Ascending aorta (tissue), 2 donors: ENCODE measurements at regions of chr6 and their contacts with region 1.

Region 1: GRCh38 chr6:35583893-35584688 is 71.4 kb upstream of the TULP1 start:
- DNase-seq: peak in 1 of 2 donors; percentile 83
- H3K4me3 ChIP-seq: no peak overlapping the region
- H3K27ac ChIP-seq: peak overlapping the region in 1 of 2 donors; percentile 3
- H3K4me1 ChIP-seq: peaks cover 7 to 50% of the 10 kb centered on the region in 2 donors
- H3K27me3 ChIP-seq: no peaks in the 10 kb centered on the region
- CTCF ChIP-seq: peak; percentile 70 to 86 (median 86)

Region 2: DNA sequence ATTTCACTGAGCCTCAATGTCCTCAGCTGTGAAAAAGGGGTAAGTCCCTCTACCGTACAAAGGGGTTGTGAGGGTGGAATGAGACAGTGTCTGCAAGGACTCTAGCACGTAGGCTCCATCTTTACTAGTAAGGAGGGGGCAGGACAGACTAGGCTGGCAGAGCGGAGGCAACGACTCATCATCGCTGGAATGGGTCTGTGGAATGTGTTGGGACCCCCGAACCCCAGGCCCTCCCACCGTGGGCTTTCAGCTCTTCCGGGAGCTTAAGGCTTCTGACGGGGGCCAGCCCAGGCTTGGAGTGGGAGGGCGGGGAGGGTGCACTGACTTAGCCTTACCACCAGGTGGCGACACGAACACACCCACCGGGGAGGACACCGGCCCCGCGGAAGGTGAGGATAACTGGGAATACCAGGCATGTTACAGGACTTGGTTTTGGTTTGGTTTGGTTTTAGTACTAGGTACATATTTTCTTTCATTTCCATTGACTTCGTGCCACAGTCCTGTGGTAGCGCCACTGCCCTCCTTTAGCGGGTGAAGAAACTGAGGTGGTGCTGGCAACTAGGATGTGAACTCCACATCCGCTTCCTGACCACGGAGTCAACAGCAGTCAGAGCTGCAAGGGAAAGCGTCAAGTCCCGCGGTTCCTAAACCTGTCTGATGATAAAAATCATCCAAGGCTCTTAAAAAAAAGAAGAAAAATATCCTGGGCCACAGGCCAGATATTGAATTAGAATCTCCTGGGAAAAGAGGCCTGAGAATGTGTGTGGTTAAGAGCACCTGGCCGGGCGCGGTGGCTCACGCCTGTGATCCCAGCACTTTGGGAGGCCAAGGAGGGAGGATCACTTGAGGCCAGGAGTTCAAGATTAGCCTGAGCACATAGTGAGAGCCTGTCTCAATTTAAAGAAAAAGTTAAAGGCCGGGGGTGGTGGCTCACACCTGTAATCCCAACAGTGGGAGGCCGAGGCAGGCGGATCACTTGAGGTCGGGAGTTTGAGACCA is 61.1 kb before region 1 on chr6:
- intact Hi-C with region 1: loop called (anchors 5 kb)
- DNase-seq: peak; percentile 10 to 83
- H3K4me3 ChIP-seq: peak overlapping the region; percentile 30 to 49
- H3K27ac ChIP-seq: no peak overlapping the region
- H3K4me1 ChIP-seq: peaks cover 0 to 3% of the 10 kb centered on the region in 2 donors
- H3K27me3 ChIP-seq: no peaks in the 10 kb centered on the region
- CTCF ChIP-seq: peak; percentile 91 to 100 (median 99)

Region 3: GRCh38 chr6:35601331-35602132 is 17.4 kb after region 1 on chr6:
- intact Hi-C with region 1: loop called (anchors 2 kb)
- DNase-seq: peak; percentile 45 to 88
- H3K4me3 ChIP-seq: peak overlapping the region; percentile 41 to 51
- H3K27ac ChIP-seq: peak overlapping the region; percentile 95 to 97
- H3K4me1 ChIP-seq: peaks cover 24 to 78% of the 10 kb centered on the region in 2 donors
- H3K27me3 ChIP-seq: no peaks in the 10 kb centered on the region
- CTCF ChIP-seq: no peak

Region 4: GRCh38 chr6:35624341-35625070 is 40.4 kb after region 1 on chr6:
- intact Hi-C with region 1: loop called (anchors 5 kb)
- DNase-seq: no peak
- H3K4me3 ChIP-seq: no peak overlapping the region
- H3K27ac ChIP-seq: peak overlapping the region in 1 of 2 donors; percentile 28
- H3K4me1 ChIP-seq: no peaks in the 10 kb centered on the region
- H3K27me3 ChIP-seq: no peaks in the 10 kb centered on the region
- CTCF ChIP-seq: peak in 1 of 3 experiments; percentile 36

Region 5: GRCh38 chr6:35688581-35689322 is 104.7 kb after region 1 on chr6 and contains the start of gene FKBP5:
- intact Hi-C with region 1: loop called (anchors 5 kb)
- DNase-seq: peak; percentile 85 to 98
- H3K4me3 ChIP-seq: peak within 1 kb of the TSS; percentile 98 to 99
- H3K27ac ChIP-seq: peak within 1 kb of the TSS; percentile 96 to 98
- H3K4me1 ChIP-seq: peaks cover 13 to 21% of the 10 kb centered on the region in 2 donors
- H3K27me3 ChIP-seq: no peaks in the 10 kb centered on the region
- CTCF ChIP-seq: no peak
- total RNA-seq, gene FKBP5: 112 TPM

Region 6: DNA sequence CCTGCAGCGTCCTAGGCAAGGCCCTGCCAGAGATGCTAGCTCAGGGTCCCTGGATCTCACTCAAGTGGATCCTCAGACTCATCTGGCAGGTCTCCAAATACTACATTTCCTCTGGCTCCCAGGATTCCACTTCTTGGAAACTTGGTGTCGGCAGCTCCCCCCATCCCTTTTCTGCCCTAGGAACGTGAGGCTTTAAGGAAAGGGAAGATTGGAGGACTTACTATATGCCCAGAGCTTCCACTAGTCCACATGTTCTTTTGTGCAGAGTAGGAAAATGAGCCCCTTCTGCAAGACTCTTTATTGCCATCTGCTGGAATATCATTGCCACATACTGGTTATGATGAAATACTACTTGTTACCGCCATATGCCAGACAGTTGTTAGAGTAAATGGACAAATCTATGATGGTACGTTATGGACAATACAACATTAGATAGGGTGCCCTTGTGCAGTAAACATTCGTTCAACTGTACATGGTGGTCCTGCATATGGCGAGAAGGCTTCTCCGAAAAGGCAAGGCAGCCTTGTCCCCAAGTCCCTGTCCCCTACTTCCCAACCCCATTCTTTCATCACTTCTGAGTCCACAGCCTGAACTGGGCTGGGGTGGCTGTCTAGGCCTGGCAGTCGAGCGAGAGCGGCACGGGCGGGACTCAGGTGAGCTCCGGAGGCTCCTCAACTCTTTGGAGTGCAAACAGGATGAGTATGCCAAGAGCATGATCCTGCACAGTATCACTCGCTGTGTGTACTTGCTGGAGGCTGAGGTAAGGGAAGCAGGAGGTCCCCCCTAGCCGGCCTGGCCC is 153.5 kb after region 1 on chr6:
- intact Hi-C with region 1: loop called (anchors 1 kb)
- DNase-seq: no peak
- H3K4me3 ChIP-seq: no peak overlapping the region
- H3K27ac ChIP-seq: no peak overlapping the region
- H3K4me1 ChIP-seq: peaks cover 5 to 23% of the 10 kb centered on the region in 2 donors
- H3K27me3 ChIP-seq: no peaks in the 10 kb centered on the region
- CTCF ChIP-seq: peak; percentile 78 to 96 (median 84)